Heart left ventricle (tissue), 16 donors: ENCODE measurements at regions of chr15 and their contacts with region 1.

Region 1: DNA sequence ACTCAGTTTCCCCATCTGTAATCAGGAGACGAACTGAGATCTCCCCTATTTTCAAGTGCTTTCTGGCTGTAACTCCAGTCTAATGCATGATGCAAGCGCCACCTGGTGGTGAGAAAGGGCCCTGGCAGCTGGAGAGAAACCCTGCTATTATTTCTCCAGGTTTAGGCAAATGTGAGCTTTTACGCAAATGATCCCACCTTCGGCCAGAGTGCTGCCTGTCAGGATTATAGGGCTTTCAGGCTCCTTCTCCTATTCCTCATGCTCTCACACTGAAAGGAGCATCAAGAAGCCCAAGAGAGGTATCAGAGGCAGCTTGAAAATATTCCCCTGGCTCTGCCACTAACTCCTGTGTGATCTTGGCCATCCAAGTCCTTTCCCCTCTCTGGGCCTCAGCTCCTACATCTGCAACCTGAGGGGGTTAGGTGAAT is 93.9 kb upstream of the RASGRF1 start:
- DNase-seq: peak; percentile 57 to 81 (median 70)
- ATAC-seq: peak in 3 of 4 donors; percentile 42 to 65 (median 50)
- H3K4me3 ChIP-seq: no peak overlapping the region
- H3K27ac ChIP-seq: no peak overlapping the region
- H3K4me1 ChIP-seq: no peaks in the 10 kb centered on the region
- H3K27me3 ChIP-seq: no peaks in the 10 kb centered on the region
- CTCF ChIP-seq: peak; percentile 89 to 99 (median 96)
- POLR2A ChIP-seq: no peak

Region 2: DNA sequence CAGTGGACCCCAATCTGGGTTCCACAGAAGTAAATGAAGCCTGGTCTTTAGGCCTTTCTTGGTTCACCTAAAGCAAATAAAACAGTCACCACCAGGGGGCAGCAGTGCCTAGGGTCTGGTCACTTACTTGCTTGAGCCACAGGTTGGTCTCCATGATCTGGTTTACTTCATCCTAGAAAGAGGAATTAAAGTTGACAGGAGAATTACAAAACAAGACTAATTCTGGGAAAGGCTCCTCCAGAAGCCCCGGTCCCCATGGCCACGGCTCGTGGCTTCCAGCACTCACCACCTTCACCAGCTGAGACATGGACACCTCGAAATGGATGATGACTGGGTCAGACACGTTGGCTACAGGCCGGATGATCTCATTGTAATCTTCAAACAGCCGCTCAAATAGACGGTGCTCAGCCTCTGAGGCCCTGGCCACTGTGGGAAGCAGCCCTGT is 566.0 kb before region 1 on chr15:
- intact Hi-C with region 1: loop called in 1 of 10 experiments (anchors 10 kb)
- DNase-seq: peak; percentile 82 to 87 (median 84)
- ATAC-seq: peak; percentile 75 to 83 (median 80)
- H3K4me3 ChIP-seq: no peak overlapping the region
- H3K27ac ChIP-seq: peak overlapping the region in 1 of 12 donors; percentile 23
- H3K4me1 ChIP-seq: peaks cover 0 to 31% (median 13%) of the 10 kb centered on the region in 12 donors
- H3K27me3 ChIP-seq: peaks cover 19 to 48% (median 28%) of the 10 kb centered on the region in 9 donors
- CTCF ChIP-seq: peak; percentile 74 to 93 (median 88)
- POLR2A ChIP-seq: no peak

Region 3: GRCh38 chr15:78859971-78860732 is 324.3 kb before region 1 on chr15:
- intact Hi-C with region 1: loop called in 1 of 10 experiments (anchors 10 kb)
- DNase-seq: peak; percentile 43 to 78 (median 63)
- ATAC-seq: peak; percentile 65 to 94 (median 87)
- H3K4me3 ChIP-seq: peak overlapping the region in 11 of 12 donors; percentile 12 to 66 (median 50)
- H3K27ac ChIP-seq: peak overlapping the region in 9 of 12 donors; percentile 8 to 70 (median 33)
- H3K4me1 ChIP-seq: peaks cover 0 to 6% (median 0%) of the 10 kb centered on the region in 12 donors
- H3K27me3 ChIP-seq: no peaks in the 10 kb centered on the region
- CTCF ChIP-seq: peak; percentile 30 to 73 (median 59)
- POLR2A ChIP-seq: no peak

Region 4: DNA sequence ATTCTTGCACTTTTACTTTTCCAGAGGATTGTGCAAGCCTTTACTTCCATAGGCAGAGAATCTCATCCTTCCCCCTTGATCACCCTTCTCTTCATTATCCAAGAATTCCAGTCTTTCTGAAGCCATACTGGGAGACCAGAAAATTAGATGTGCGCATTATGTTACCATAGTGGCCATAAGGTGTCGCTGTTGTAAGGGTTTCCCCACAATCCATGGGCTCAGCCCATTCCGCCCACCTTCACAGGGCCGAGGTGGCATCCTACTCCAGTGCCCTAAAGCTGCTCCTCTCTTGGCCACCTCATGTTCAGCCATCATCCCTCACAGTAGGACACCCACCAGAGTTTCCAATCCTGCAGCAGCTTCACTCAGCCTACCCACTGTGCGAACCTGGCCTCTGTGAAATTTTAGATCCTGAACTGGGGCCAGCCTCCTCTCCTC is 274.7 kb before region 1 on chr15:
- intact Hi-C with region 1: loop called in 9 of 10 experiments (anchors 2 to 10 kb)
- DNase-seq: peak in 1 of 5 donors; percentile 23
- ATAC-seq: peak in 3 of 4 donors; percentile 33 to 50 (median 42)
- H3K4me3 ChIP-seq: no peak overlapping the region
- H3K27ac ChIP-seq: no peak overlapping the region
- H3K4me1 ChIP-seq: peaks cover 0 to 59% (median 41%) of the 10 kb centered on the region in 12 donors
- H3K27me3 ChIP-seq: no peaks in the 10 kb centered on the region
- CTCF ChIP-seq: peak; percentile 54 to 74 (median 67)
- POLR2A ChIP-seq: no peak

Region 5: GRCh38 chr15:79028411-79028964 is 156.0 kb before region 1 on chr15:
- intact Hi-C with region 1: loop called (anchors 1 to 2 kb)
- DNase-seq: peak in 1 of 5 donors; percentile 18
- ATAC-seq: peak in 2 of 4 donors; percentile 38 to 44
- H3K4me3 ChIP-seq: no peak overlapping the region
- H3K27ac ChIP-seq: no peak overlapping the region
- H3K4me1 ChIP-seq: no peaks in the 10 kb centered on the region
- H3K27me3 ChIP-seq: peaks cover 0 to 5% (median 0%) of the 10 kb centered on the region in 9 donors
- CTCF ChIP-seq: peak; percentile 64 to 79 (median 78)
- POLR2A ChIP-seq: no peak